PC-3 (cell line): ENCODE measurements at regions of chr17 and their contacts with region 1.

Region 1: GRCh38 chr17:57243171-57243948 is 13.0 kb upstream of the MSI2 start:
- DNase-seq: peak; percentile 83
- ATAC-seq: peak; percentile 73
- H3K4me3 ChIP-seq: no peak overlapping the region
- H3K27ac ChIP-seq: no peak overlapping the region
- H3K4me1 ChIP-seq: no peaks in the 10 kb centered on the region
- H3K27me3 ChIP-seq: no peaks in the 10 kb centered on the region
- CTCF ChIP-seq: peak; percentile 100

Region 2: GRCh38 chr17:57266902-57267563 is 23.7 kb after region 1 on chr17:
- CTCF ChIA-PET with region 1: no interaction called
- POLR2A ChIA-PET with region 1: no interaction called
- intact Hi-C with region 1: no loop called
- DNase-seq: no peak
- ATAC-seq: no peak
- H3K4me3 ChIP-seq: no peak overlapping the region
- H3K27ac ChIP-seq: no peak overlapping the region
- H3K4me1 ChIP-seq: no peaks in the 10 kb centered on the region
- H3K27me3 ChIP-seq: no peaks in the 10 kb centered on the region
- CTCF ChIP-seq: no peak

Region 3: DNA sequence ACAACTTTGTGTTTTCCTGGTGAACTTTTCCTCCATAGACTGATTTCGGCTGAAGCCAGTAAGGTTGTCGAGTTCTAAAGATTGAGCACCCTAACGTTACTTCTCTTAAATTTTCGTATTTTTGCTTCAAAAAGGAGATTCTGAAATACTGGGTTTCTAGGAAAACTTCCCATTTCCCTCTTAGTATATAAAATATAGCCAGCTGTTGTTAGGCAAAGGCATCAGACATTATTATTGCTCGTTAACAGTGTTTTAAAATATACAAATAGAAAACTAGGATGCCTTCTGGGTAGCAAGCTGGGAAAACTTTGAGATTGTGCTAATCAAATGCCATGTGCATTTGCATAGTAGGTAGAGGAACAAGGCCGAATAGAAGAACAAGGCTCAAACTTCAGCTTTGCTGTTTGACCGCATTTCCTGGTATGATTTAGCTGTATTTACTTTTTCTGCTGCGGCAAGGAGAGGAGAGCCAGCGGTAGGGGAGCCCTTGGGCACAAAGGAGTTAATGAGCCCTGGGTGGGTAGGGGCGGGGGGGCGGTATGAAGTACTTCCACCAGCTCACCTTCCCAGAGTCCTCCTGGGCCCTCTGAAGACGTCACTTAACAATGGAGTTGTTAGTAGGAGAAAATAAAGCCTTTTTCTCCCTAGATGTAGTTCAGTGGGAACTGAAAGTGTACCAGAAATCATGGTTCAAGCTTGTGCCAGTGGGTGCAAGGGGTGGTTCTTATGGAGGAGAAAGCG is 164.9 kb after region 1 on chr17:
- CTCF ChIA-PET with region 1: interaction called, 10 read pairs
- POLR2A ChIA-PET with region 1: no interaction called
- intact Hi-C with region 1: no loop called
- DNase-seq: peak; percentile 76
- ATAC-seq: peak; percentile 51
- H3K4me3 ChIP-seq: peak overlapping the region; percentile 57
- H3K27ac ChIP-seq: peak overlapping the region; percentile 96
- H3K4me1 ChIP-seq: peaks cover 37% of the 10 kb centered on the region
- H3K27me3 ChIP-seq: no peaks in the 10 kb centered on the region
- CTCF ChIP-seq: no peak

Region 4: DNA sequence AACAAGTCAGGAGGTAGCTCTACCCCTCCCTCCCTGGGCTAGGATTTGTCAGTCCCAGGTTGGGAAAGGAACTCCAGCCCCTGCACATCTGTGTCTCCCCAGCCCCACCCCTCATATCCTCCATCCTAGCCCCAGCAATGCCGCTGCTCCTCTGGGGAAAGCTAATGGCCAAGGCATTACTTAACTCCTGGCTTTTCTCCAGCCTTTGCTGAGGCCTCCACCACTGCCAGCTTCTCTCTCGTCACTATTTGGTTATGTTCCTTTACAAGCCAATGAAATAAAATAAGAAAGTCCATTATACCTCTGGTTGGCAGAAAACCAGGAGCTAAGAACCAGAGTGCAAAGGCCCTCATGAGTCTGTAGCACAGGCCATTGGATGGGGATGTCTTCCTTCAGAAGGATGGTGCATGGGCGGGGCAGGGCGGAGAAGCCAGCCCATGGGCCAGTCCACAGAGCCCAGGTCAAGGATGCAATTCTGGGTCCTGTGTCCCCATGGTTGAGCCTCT is 330.7 kb after region 1 on chr17:
- CTCF ChIA-PET with region 1: interaction called, 12 read pairs
- POLR2A ChIA-PET with region 1: no interaction called
- intact Hi-C with region 1: no loop called
- DNase-seq: peak; percentile 62
- ATAC-seq: peak; percentile 78
- H3K4me3 ChIP-seq: no peak overlapping the region
- H3K27ac ChIP-seq: peak overlapping the region; percentile 27
- H3K4me1 ChIP-seq: peaks cover 25% of the 10 kb centered on the region
- H3K27me3 ChIP-seq: no peaks in the 10 kb centered on the region
- CTCF ChIP-seq: no peak

Region 5: GRCh38 chr17:57671667-57672632 is 428.6 kb after region 1 on chr17:
- CTCF ChIA-PET with region 1: interaction called, 13 read pairs
- POLR2A ChIA-PET with region 1: no interaction called
- intact Hi-C with region 1: loop called (anchors 5 kb)
- DNase-seq: peak; percentile 81
- ATAC-seq: peak; percentile 99
- H3K4me3 ChIP-seq: no peak overlapping the region
- H3K27ac ChIP-seq: no peak overlapping the region
- H3K4me1 ChIP-seq: peaks cover 4% of the 10 kb centered on the region; the same call in 1 of the 2 replicates
- H3K27me3 ChIP-seq: no peaks in the 10 kb centered on the region
- CTCF ChIP-seq: peak; percentile 100

Region 6: DNA sequence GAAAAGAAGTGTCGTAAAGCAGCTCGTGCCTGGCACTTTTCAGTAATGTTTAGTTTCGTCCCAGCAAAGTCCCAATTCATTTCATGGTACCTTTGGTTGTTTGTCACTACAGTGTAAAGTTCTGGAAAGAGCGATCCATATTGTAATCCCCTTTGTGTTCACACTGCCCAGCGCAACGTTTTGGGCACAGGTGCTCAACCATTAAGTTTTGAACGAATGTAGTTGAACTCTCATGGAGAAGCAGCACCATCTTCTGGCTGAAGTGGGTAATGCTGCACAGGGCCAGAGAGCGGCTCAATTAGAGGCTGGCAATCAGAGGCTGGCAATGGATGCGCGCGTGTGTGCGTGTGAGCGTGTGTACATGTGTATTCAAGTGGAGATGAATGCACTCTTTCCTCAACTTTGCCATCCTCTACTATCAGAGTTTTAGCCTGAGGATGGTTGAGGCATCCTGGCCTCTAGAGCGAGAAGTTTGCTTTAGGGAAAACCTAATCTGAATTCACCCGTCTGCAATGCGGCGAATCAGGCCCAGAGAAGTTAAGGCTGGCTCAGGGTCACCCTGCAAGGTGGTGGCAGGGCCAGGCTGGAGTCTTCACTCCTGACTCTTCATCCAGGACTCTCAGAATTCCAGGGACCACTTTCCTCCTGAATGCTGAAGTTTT is 869.7 kb after region 1 on chr17:
- CTCF ChIA-PET with region 1: no interaction called
- POLR2A ChIA-PET with region 1: no interaction called
- intact Hi-C with region 1: loop called (anchors 5 kb)
- DNase-seq: peak; percentile 93
- ATAC-seq: peak; percentile 86
- H3K4me3 ChIP-seq: no peak overlapping the region
- H3K27ac ChIP-seq: no peak overlapping the region
- H3K4me1 ChIP-seq: no peaks in the 10 kb centered on the region
- H3K27me3 ChIP-seq: no peaks in the 10 kb centered on the region; the same call in 1 of the 2 replicates
- CTCF ChIP-seq: peak; percentile 98